ENCODE measurements at regions of chr19 and their contacts with region 1.

Region 1: GRCh38 chr19:20167020-20167644 is at the start of gene ZNF486:
- DNase-seq: peak; percentile 96
- ATAC-seq: peak; percentile 97
- H3K4me3 Mint-ChIP-seq: peak within 1 kb of the TSS; percentile 98
- H3K27ac Mint-ChIP-seq: peak within 1 kb of the TSS; percentile 98
- H3K4me1 Mint-ChIP-seq: peaks cover 40% of the 10 kb centered on the region
- H3K27me3 Mint-ChIP-seq: no peaks in the 10 kb centered on the region
- total RNA-seq, gene ZNF486: 13.1 to 13.9 TPM

Region 2: GRCh38 chr19:19865739-19866481 is 301.2 kb before region 1 on chr19 and contains the start of gene ZNF253:
- CTCF ChIA-PET with region 1: no interaction called
- POLR2A ChIA-PET with region 1: interaction called, 11 read pairs
- DNase-seq: peak; percentile 99
- ATAC-seq: peak; percentile 96
- H3K4me3 Mint-ChIP-seq: peak within 1 kb of the TSS; percentile 100
- H3K27ac Mint-ChIP-seq: peak within 1 kb of the TSS; percentile 100
- H3K4me1 Mint-ChIP-seq: peaks cover 32% of the 10 kb centered on the region
- H3K27me3 Mint-ChIP-seq: no peaks in the 10 kb centered on the region
- total RNA-seq, gene ZNF253: 15.7 to 17.5 TPM

Region 3: GRCh38 chr19:19900729-19901444 is 266.2 kb before region 1 on chr19 and contains the start of gene ZNF93:
- CTCF ChIA-PET with region 1: no interaction called
- POLR2A ChIA-PET with region 1: interaction called, 16 read pairs
- DNase-seq: peak; percentile 96
- ATAC-seq: peak; percentile 96
- H3K4me3 Mint-ChIP-seq: peak within 1 kb of the TSS; percentile 97
- H3K27ac Mint-ChIP-seq: peak within 1 kb of the TSS; percentile 98
- H3K4me1 Mint-ChIP-seq: peaks cover 40% of the 10 kb centered on the region
- H3K27me3 Mint-ChIP-seq: no peaks in the 10 kb centered on the region
- total RNA-seq, gene ZNF93: 15.8 to 17.9 TPM

Region 4: DNA sequence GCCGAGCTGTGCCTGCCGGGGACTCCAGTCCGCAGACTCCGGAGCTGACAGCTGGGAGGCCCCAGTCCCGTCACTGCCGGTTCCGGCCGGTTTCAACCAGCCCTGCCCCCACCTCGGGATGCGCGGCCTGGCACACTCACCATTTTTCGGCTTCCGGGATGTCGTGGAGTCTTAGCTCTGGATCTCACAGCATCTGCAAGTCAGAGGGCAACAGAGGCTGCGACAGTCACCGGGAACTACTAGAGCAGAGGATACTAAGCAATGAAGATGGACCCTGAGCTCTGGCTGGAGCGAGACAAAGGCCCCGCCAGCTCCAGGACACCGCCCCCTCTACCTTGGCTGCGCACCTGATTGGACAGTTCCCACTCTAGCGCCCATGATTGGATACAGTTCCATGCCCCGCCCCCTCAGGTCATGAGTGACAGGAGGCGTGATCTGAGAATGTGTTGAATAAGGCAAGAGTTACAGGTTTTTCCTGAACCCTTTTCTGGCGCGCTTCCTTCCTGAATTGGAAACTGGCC is 127.9 kb before region 1 on chr19 and contains the start of gene ZNF682:
- CTCF ChIA-PET with region 1: no interaction called
- POLR2A ChIA-PET with region 1: interaction called, 11 read pairs
- DNase-seq: peak; percentile 97
- ATAC-seq: peak; percentile 100
- H3K4me3 Mint-ChIP-seq: peak within 1 kb of the TSS; percentile 96
- H3K27ac Mint-ChIP-seq: peak within 1 kb of the TSS; percentile 99
- H3K4me1 Mint-ChIP-seq: peaks cover 15% of the 10 kb centered on the region
- H3K27me3 Mint-ChIP-seq: no peaks in the 10 kb centered on the region
- total RNA-seq, gene ZNF682: 10.9 to 13.6 TPM

Region 5: DNA sequence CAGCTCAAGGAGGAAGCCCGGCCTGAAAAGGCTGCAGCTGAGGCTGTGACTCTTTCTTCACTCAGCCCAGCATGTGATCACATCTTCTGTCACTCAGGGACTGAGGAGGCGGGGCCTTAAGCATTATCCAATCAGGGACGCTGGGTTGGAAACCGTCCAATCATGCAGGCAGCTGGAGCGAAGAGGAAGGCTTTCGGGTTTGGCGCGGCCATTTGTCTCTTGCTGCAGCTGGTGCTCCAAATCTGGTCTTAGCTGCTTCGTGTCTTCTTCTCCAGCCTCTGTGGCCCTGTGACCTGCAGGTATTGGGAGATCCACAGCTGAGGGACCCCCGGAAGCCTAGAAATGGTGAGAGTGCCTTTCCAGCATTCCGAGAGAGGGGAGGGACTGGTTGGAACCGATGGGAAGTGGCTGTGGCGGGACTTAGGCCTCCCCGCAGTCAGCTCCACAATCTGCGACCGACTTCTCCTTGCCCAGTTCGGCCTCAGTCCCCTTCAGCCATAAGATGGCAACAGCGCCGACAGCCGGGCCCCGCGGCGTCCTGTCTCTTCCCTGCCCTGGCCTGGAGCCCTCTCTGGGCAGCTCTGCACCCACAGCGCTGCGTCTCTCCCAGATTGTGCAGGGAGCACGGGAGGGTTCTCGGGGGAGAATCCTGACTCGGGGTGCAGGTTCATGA is 89.2 kb before region 1 on chr19 and contains the start of gene ZNF90:
- CTCF ChIA-PET with region 1: no interaction called
- POLR2A ChIA-PET with region 1: interaction called, 13 read pairs
- DNase-seq: peak; percentile 95
- ATAC-seq: peak; percentile 99
- H3K4me3 Mint-ChIP-seq: peak within 1 kb of the TSS; percentile 90
- H3K27ac Mint-ChIP-seq: peak within 1 kb of the TSS; percentile 82
- H3K4me1 Mint-ChIP-seq: peaks cover 21% of the 10 kb centered on the region
- H3K27me3 Mint-ChIP-seq: no peaks in the 10 kb centered on the region
- total RNA-seq, gene ZNF90: 16.2 to 17.0 TPM

Region 6: GRCh38 chr19:20237761-20238623 is 70.9 kb after region 1 on chr19:
- CTCF ChIA-PET with region 1: interaction called, 4 read pairs
- POLR2A ChIA-PET with region 1: interaction called, 22 read pairs
- DNase-seq: peak; percentile 94
- ATAC-seq: peak; percentile 96
- H3K4me3 Mint-ChIP-seq: peak overlapping the region; percentile 100
- H3K27ac Mint-ChIP-seq: peak overlapping the region; percentile 99
- H3K4me1 Mint-ChIP-seq: peaks cover 20% of the 10 kb centered on the region
- H3K27me3 Mint-ChIP-seq: no peaks in the 10 kb centered on the region